Activated CD4-positive, alpha-beta T cell treated with anti-CD3 and anti-CD28 coated beads for 36 hours (primary cell): ENCODE measurements at regions of chr3 and their contacts with region 1.

Region 1: GRCh38 chr3:151227807-151228665 is 25.0 kb upstream of the GPR171 start:
- DNase-seq: peak; percentile 87
- ATAC-seq: peak; percentile 75
- H3K4me3 Mint-ChIP-seq: no peak overlapping the region
- H3K27ac Mint-ChIP-seq: peak overlapping the region; percentile 64
- H3K4me1 Mint-ChIP-seq: peaks cover 58% of the 10 kb centered on the region
- H3K27me3 Mint-ChIP-seq: no peaks in the 10 kb centered on the region

Region 2: GRCh38 chr3:150255413-150255812 is 972.6 kb before region 1 on chr3:
- CTCF ChIA-PET with region 1: no interaction called
- POLR2A ChIA-PET with region 1: no interaction called
- intact Hi-C with region 1: no loop called
- DNase-seq: no peak
- ATAC-seq: no peak
- H3K4me3 Mint-ChIP-seq: no peak overlapping the region
- H3K27ac Mint-ChIP-seq: no peak overlapping the region
- H3K4me1 Mint-ChIP-seq: no peaks in the 10 kb centered on the region
- H3K27me3 Mint-ChIP-seq: no peaks in the 10 kb centered on the region

Region 3: DNA sequence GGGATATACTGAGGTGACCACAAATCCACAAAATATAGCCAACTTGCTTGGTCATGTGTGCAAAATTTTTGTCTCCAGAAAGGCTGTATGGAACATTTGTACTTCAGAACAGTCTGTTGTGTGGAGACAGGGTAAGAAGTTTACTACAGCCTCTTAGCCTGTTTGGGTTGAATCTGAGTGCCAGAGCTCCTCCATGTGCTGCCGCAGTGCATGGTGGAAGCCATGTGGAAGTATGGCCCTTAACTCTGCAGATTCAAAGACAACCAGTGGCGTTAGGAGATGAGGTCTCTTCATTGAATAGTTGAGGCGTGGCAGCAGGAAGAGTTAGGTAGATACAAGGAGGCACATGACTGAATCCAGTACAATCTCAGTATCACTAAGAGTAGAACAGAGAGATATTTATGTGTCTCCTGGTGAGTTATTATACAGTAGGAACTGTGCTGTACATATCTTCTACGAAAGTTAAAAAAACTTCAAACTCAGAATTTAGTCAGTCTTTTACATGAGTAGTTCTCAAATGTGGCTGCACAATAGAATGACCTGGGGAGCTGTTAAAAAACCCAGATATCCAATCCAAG is 672.1 kb before region 1 on chr3:
- CTCF ChIA-PET with region 1: no interaction called
- POLR2A ChIA-PET with region 1: no interaction called
- intact Hi-C with region 1: no loop called
- DNase-seq: no peak
- ATAC-seq: peak; percentile 30
- H3K4me3 Mint-ChIP-seq: no peak overlapping the region
- H3K27ac Mint-ChIP-seq: no peak overlapping the region
- H3K4me1 Mint-ChIP-seq: peaks cover 27% of the 10 kb centered on the region
- H3K27me3 Mint-ChIP-seq: no peaks in the 10 kb centered on the region

Region 4: DNA sequence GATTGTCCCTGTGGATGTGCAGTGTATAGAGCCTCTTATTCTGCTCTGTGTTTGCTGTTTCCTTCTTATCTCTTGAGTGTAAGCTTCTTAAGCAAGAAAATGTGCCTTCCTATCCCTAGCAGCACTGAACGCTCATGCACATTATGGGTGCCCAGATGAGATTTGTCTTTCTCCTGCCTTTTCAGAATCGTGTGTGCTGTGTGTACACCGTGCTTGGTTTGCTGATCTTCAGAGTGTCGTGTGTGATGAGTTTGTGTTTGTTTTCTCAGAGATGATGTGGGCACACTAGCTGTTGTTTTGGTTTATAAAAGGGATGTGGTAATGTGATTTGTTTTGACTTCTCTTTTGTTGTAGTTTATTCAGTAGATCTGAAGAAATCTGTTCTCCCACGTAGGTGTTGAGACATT is 44.8 kb before region 1 on chr3:
- CTCF ChIA-PET with region 1: interaction called, 11 read pairs
- POLR2A ChIA-PET with region 1: no interaction called
- intact Hi-C with region 1: no loop called
- DNase-seq: no peak
- ATAC-seq: peak; percentile 59
- H3K4me3 Mint-ChIP-seq: peak overlapping the region; percentile 63
- H3K27ac Mint-ChIP-seq: peak overlapping the region; percentile 87
- H3K4me1 Mint-ChIP-seq: peaks cover 42% of the 10 kb centered on the region
- H3K27me3 Mint-ChIP-seq: no peaks in the 10 kb centered on the region

Region 5: DNA sequence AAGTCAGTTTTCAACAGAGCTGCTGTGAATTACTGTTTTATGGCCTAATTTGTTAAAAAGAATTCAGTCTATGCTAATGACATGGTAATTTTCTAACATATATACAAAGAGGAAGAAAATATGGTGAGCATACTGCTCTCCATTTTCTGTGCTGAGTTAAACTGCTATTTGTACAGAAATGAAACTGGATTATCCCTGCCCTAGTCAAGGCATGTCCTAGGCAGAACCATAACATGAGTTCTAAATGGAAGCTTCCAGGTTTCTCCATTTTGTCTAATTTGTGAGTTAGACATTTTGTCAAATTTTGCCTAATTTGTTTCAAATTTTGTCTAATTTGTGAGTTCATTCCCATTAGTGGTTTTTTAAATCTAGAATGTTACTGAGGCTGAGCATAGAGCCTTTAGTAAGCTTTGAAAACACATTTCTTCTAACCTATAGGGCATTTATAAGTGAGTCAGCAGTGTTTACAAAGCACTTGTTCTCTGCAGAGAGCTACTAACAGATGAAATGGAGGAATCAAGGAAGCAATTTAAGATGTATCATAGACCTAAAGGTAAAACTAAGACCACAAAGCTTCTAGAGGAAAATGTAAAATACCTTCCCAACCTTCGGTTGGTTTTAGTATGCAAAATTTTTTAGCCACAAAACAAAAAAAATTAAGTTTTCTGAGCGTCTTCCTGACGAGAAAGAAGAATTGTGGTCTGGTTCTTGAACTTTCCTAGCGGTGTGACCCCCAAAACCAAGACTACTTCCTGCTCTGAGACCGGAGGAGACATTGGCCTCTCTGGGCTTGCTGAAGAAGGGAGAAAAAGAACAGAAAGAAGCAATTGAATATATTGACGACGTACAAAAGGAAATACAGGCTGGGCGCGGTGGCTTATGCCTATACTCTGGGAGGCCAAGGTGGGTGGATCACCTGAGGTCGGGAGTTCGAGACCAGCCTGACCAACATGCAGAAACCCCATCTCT is 40.5 kb after region 1 on chr3:
- CTCF ChIA-PET with region 1: interaction called, 25 read pairs
- POLR2A ChIA-PET with region 1: no interaction called
- intact Hi-C with region 1: no loop called
- DNase-seq: peak; percentile 56
- ATAC-seq: peak; percentile 86
- H3K4me3 Mint-ChIP-seq: peak overlapping the region; percentile 13
- H3K27ac Mint-ChIP-seq: peak overlapping the region; percentile 53
- H3K4me1 Mint-ChIP-seq: peaks cover 11% of the 10 kb centered on the region
- H3K27me3 Mint-ChIP-seq: no peaks in the 10 kb centered on the region

Region 6: DNA sequence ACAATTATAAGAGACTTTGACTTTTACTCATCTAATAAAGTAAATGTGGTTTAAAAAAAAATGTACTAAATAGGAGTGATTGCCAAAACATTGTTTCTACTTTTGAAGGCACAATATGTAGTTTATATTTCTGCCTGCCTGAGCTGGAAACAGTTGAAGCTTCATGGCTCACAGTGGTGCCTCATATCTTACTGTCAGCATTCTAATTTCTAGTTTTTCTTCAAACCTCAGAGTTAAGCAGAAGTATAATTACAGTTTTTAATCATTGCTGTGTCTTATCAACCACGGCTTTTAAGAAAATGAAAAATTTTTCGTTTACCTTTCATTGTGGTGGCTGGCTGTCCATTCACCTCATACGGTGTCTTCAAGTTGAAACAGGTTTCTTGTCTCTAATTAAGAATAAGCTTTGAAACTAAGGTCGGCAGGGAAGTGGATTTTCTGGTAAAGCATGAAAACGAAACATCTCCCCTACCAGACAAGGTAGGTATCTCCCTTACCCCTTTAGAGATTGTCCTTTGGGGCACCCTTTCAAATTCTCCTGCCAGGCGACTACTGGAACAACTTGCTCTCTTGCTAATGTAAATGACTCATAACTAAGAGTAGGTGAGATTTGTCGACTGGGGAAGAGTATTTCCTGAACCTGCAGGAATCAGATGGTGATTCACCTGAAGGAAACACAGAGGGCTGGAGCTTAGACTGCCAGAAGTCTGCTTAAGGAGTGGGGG is 88.4 kb after region 1 on chr3 and contains the start of gene GPR87:
- CTCF ChIA-PET with region 1: interaction called, 6 read pairs
- POLR2A ChIA-PET with region 1: interaction called, 5 read pairs
- intact Hi-C with region 1: loop called in 1 of 2 experiments (anchors 1 kb)
- DNase-seq: peak; percentile 50
- ATAC-seq: peak; percentile 83
- H3K4me3 Mint-ChIP-seq: peak within 1 kb of the TSS; percentile 50
- H3K27ac Mint-ChIP-seq: peak within 1 kb of the TSS; percentile 90
- H3K4me1 Mint-ChIP-seq: peaks cover 47% of the 10 kb centered on the region
- H3K27me3 Mint-ChIP-seq: peaks cover 2% of the 10 kb centered on the region
- total RNA-seq, gene GPR87: 2.3 to 2.5 TPM

Region 7: GRCh38 chr3:151425627-151426335 is 197.7 kb after region 1 on chr3:
- CTCF ChIA-PET with region 1: no interaction called
- POLR2A ChIA-PET with region 1: no interaction called
- intact Hi-C with region 1: no loop called
- DNase-seq: no peak
- ATAC-seq: no peak
- H3K4me3 Mint-ChIP-seq: no peak overlapping the region
- H3K27ac Mint-ChIP-seq: no peak overlapping the region
- H3K4me1 Mint-ChIP-seq: no peaks in the 10 kb centered on the region
- H3K27me3 Mint-ChIP-seq: peaks cover 2% of the 10 kb centered on the region

Region 8: DNA sequence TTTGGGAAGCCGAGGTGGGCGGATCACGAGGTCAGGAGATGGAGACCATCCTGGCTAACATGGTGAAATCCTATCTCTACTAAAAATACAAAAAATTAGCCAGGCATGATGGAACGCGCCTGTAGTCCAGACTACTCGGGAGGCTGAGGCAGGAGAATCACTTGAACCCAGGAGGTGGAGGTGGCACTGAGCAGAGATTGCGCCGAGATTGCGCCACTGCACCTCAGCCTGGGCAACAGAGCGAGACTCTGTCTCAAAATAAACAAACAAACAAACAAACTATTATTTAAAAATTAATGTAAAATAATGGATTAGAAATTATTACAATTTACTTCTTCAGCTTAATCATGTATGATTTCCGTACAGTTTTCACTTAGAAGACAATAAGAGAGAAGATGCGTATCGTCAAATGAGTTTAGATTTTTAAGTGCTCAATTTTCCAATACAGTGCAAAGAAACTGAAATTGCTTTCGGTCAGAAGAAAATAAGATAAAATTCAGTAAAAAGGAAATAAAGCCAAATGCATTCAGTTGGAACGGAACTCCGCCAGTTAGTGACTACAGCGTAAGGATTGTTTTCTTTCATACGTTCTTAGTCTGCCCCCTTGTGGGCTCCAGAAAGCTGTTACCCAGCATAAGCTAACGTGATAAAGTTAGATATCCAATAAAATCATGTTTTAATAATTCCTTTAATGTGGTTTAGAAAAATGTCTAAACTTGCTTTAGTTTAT is 610.7 kb after region 1 on chr3:
- CTCF ChIA-PET with region 1: interaction called, 9 read pairs
- POLR2A ChIA-PET with region 1: no interaction called
- intact Hi-C with region 1: loop called (anchors 1 kb)
- DNase-seq: peak; percentile 56
- ATAC-seq: peak; percentile 69
- H3K4me3 Mint-ChIP-seq: no peak overlapping the region
- H3K27ac Mint-ChIP-seq: no peak overlapping the region
- H3K4me1 Mint-ChIP-seq: peaks cover 3% of the 10 kb centered on the region
- H3K27me3 Mint-ChIP-seq: peaks cover 7% of the 10 kb centered on the region